H1 (cell line): ENCODE measurements at regions of chr3 and their contacts with region 1.

Region 1: GRCh38 chr3:32257639-32258038 is 19.2 kb downstream of the CMTM8 start:
- DNase-seq: no peak
- H3K4me3 ChIP-seq: no peak overlapping the region
- H3K27ac ChIP-seq: no peak overlapping the region
- H3K4me1 ChIP-seq: no peaks in the 10 kb centered on the region
- H3K27me3 ChIP-seq: no peaks in the 10 kb centered on the region
- CTCF ChIP-seq: no peak
- EP300 ChIP-seq: no peak
- POLR2A ChIP-seq: no peak
- RAD21 ChIP-seq: no peak

Region 2: DNA sequence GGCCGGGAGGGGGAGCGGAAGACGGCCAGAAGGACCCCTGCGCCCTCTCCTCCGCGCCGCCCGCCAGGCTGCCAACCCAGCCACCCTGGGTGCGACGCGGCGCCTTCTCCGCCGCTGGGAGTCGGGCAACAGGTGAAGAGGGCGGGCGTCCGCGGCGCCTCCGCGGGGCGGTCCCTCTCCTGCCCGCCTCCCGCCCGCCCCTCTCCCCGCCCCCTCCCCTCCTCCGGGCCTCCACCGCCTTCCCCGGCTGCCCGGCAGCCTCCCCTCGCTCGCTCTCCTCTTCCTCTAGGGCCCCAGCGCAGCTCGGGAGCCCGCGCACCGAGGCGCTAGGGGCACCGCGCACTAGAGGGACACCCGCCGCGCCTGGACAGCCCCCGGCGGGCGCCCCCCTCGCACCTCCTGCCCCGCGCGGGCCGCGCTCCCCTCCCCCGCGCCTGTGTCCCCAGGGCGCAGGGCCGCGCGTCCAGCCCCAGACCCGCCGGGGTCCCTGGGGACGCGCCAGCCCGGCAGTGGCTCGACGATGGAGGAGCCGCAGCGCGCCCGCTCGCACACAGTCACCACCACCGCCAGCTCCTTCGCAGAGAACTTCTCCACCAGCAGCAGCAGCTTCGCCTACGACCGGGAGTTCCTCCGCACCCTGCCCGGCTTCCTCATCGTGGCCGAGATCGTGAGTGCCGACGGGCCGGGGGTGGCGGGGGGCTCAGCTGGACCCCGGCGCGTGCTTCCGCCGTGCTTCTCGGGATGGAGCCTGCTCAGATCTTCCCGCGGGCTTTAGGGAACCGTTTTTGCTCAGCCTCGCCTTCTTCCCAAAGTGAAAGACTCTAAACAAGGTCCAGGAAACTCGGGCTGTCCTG is 19.0 kb before region 1 on chr3 and contains the start of gene CMTM8:
- CTCF ChIA-PET with region 1: interaction called, 35 read pairs
- POLR2A ChIA-PET with region 1: interaction called, 4 read pairs
- DNase-seq: peak in 1 of 2 experiments; percentile 77
- H3K4me3 ChIP-seq: peak within 1 kb of the TSS; percentile 54 to 72 (median 64)
- H3K27ac ChIP-seq: no peak within 1 kb of the TSS
- H3K4me1 ChIP-seq: peaks cover 0 to 8% (median 4%) of the 10 kb centered on the region in 4 experiments; a peak in 5 of 7 replicates
- H3K27me3 ChIP-seq: peaks cover 2 to 31% (median 19%) of the 10 kb centered on the region in 4 experiments
- CTCF ChIP-seq: no peak
- EP300 ChIP-seq: no peak
- POLR2A ChIP-seq: no peak
- RAD21 ChIP-seq: no peak
- total RNA-seq, gene CMTM8: 10.5 and 11.7 TPM in 2 replicates